IMR-90 (cell line): ENCODE measurements at regions of chr1 and their contacts with region 1.

Region 1: DNA sequence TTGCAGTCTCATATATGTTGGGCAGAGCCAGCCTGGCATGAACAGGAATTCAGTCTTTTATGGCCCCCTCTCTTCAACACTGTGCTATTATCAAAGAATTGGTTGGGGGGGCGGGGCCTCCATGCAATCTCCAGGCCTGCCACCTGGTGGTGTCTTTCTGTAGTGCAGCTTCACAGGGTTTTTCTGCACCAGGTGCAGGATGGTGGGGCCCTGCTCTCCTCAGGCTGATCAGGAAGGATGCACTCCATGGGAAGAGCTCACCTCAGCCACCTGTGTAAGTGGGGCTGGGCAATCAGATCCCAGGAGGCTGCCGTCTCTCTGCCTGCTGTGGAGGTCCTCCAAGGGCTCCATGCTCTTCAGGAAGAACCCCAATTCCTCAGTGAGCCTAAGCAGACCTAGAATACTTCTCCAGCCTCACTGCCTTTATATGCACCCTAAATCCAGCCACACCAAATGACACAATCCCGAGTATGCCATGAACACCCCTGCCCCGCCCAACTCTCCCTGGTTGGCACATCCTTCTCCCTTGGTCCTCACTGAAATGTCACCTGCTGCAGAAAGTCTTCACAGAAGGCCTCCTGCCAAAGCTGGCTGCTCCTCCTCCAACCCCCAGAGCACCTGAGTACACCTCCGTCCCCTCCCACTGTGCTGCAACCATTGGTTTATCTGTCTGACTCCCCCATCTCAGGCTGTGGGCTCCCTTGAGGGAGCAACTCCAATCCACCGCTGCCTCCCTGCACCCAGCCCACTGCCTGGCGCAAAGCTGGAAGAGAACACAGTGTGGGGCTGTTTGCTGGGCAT is 16.5 kb downstream of the STK40 start:
- DNase-seq: peak; percentile 60
- ATAC-seq: peak; percentile 56
- H3K4me3 ChIP-seq: no peak overlapping the region
- H3K27ac ChIP-seq: 0 out of 2 replicates have a peak overlapping the region, but pooled peaks have one; percentile 4
- H3K4me1 ChIP-seq: peaks cover 29% of the 10 kb centered on the region
- H3K27me3 ChIP-seq: no peaks in the 10 kb centered on the region
- CTCF ChIP-seq: peak; percentile 90
- POLR2A ChIP-seq: no peak
- RAD21 ChIP-seq: peak; percentile 74

Region 2: GRCh38 chr1:36099681-36100341 is 269.4 kb before region 1 on chr1:
- CTCF ChIA-PET with region 1: no interaction called
- POLR2A ChIA-PET with region 1: no interaction called
- dilution Hi-C with region 1: no loop called
- in situ Hi-C with region 1: no loop called
- intact Hi-C with region 1: loop called (anchors 1 kb)
- DNase-seq: peak; percentile 73
- ATAC-seq: peak; percentile 94
- H3K4me3 ChIP-seq: no peak overlapping the region
- H3K27ac ChIP-seq: no peak overlapping the region
- H3K4me1 ChIP-seq: no peaks in the 10 kb centered on the region
- H3K27me3 ChIP-seq: no peaks in the 10 kb centered on the region
- CTCF ChIP-seq: peak; percentile 92
- POLR2A ChIP-seq: no peak
- RAD21 ChIP-seq: peak; percentile 98

Region 3: GRCh38 chr1:36323597-36324352 is 45.5 kb before region 1 on chr1 and contains the start of gene EVA1B:
- CTCF ChIA-PET with region 1: no interaction called
- POLR2A ChIA-PET with region 1: interaction called, 3 read pairs
- dilution Hi-C with region 1: no loop called
- in situ Hi-C with region 1: no loop called
- intact Hi-C with region 1: loop called (anchors 5 kb)
- DNase-seq: peak; percentile 82
- ATAC-seq: peak; percentile 63
- H3K4me3 ChIP-seq: peak within 1 kb of the TSS; percentile 78
- H3K27ac ChIP-seq: peak within 1 kb of the TSS; percentile 94
- H3K4me1 ChIP-seq: peaks cover 30% of the 10 kb centered on the region
- H3K27me3 ChIP-seq: no peaks in the 10 kb centered on the region
- CTCF ChIP-seq: no peak
- POLR2A ChIP-seq: no peak
- RAD21 ChIP-seq: no peak
- total RNA-seq, gene EVA1B: 49.8 and 63.3 TPM in 2 replicates

Region 4: GRCh38 chr1:36342481-36343478 is 26.5 kb before region 1 on chr1:
- CTCF ChIA-PET with region 1: interaction called, 5 read pairs
- POLR2A ChIA-PET with region 1: interaction called, 3 read pairs
- dilution Hi-C with region 1: no loop called
- in situ Hi-C with region 1: no loop called
- intact Hi-C with region 1: loop called (anchors 1 kb)
- DNase-seq: peak; percentile 67
- ATAC-seq: peak; percentile 77
- H3K4me3 ChIP-seq: no peak overlapping the region
- H3K27ac ChIP-seq: peak overlapping the region; percentile 40
- H3K4me1 ChIP-seq: peaks cover 12% of the 10 kb centered on the region
- H3K27me3 ChIP-seq: no peaks in the 10 kb centered on the region
- CTCF ChIP-seq: peak; percentile 80
- POLR2A ChIP-seq: no peak
- RAD21 ChIP-seq: peak; percentile 88

Region 5: GRCh38 chr1:36350659-36351226 is 18.5 kb before region 1 on chr1:
- CTCF ChIA-PET with region 1: interaction called, 15 read pairs
- POLR2A ChIA-PET with region 1: no interaction called
- dilution Hi-C with region 1: no loop called
- in situ Hi-C with region 1: no loop called
- intact Hi-C with region 1: loop called (anchors 2 kb)
- DNase-seq: peak; percentile 80
- ATAC-seq: peak; percentile 73
- H3K4me3 ChIP-seq: no peak overlapping the region
- H3K27ac ChIP-seq: peak overlapping the region; percentile 91
- H3K4me1 ChIP-seq: peaks cover 45% of the 10 kb centered on the region
- H3K27me3 ChIP-seq: no peaks in the 10 kb centered on the region
- CTCF ChIP-seq: no peak
- POLR2A ChIP-seq: no peak
- RAD21 ChIP-seq: no peak

Region 6: GRCh38 chr1:36385410-36386257 is 16.4 kb after region 1 on chr1 and contains the start of gene STK40:
- CTCF ChIA-PET with region 1: interaction called, 10 read pairs
- POLR2A ChIA-PET with region 1: interaction called, 4 read pairs
- dilution Hi-C with region 1: no loop called
- in situ Hi-C with region 1: no loop called
- intact Hi-C with region 1: no loop called
- DNase-seq: peak; percentile 100
- ATAC-seq: peak; percentile 87
- H3K4me3 ChIP-seq: peak within 1 kb of the TSS; percentile 96
- H3K27ac ChIP-seq: peak within 1 kb of the TSS; percentile 94
- H3K4me1 ChIP-seq: peaks cover 20% of the 10 kb centered on the region
- H3K27me3 ChIP-seq: no peaks in the 10 kb centered on the region
- CTCF ChIP-seq: no peak
- POLR2A ChIP-seq: no peak; the same call in none of the 2 replicates
- RAD21 ChIP-seq: no peak
- total RNA-seq, gene STK40: 13.9 and 16.0 TPM in 2 replicates